ENCODE measurements at regions of chr6 and their contacts with region 1.

Region 1: DNA sequence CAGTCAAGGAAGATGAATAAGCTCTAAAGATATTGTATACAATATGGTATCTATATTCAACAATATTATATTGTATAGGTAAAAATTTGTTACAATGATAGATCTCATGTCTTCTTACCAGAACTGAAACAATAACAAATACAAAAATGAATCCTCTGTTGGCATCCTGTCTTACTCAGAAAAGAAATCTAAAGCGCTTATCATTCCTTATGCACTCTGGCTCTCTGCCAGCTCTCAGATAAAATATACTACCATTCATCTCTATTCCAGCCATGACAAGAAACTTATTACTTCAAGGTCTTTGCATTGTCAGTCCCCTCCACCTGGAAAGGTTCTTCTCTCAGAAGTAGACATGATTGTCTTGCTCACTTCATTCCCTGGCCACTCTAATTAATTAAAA is 138.6 kb downstream of the THEMIS start:
- DNase-seq: no peak

Region 2: DNA sequence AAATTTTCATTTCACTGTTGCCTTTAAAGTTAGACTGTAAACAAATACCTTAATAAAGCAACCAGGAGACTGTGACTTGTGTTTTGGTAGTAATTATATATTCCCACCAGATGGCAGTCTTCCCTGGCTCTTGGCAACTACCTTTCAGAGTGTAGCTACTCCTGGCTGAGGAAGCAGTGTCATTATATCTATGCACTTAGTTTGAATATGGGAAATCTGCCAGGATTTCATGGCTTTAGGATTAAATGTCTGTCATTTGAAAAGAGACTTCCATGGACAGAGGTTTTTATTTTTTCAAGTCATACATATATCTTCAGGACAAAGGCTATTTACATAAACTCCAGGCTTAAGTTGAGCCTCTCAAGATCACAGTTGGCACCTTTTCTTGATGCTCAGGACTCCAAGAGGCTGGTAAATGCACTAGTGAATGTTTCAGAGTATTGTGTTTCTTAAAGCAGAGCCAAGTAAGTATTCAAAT is 25.2 kb before region 1 on chr6:
- intact Hi-C with region 1: loop called in 1 of 2 experiments (anchors 1 kb)
- DNase-seq: no peak

Region 3: GRCh38 chr6:127811900-127812570 is 49.8 kb after region 1 on chr6:
- intact Hi-C with region 1: no loop called
- DNase-seq: no peak